ENCODE measurements at regions of chr13 and their contacts with region 1.

Region 1: DNA sequence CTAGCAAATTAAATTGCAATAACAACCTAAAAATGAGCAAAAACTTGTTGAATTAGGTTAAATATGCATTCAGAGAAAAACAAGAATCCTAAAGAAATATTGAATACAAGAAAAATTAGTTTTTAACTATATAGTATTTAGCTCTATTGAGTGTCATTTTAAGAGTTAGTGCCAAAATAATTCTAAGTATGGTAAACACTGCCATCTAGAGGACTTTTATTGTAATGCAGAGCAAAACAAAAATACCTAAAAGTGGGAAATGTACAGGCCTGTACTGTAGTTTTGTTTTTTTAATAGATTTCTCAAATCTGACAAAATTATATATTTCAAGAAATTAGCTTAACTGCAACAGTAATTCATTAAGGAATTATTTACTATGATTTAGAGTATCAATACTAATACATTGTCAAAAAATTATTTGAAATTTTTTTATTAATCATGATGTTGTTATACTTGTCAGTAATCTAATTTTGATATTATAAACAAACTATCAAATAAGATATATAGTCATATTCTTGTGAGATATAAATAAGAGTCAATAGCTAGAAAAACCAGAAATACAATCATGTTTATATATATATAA is 8.2 kb upstream of the PCDH9 start:
- DNase-seq: no peak
- H3K4me3 Mint-ChIP-seq: no peak overlapping the region
- H3K27ac Mint-ChIP-seq: no peak overlapping the region
- H3K4me1 Mint-ChIP-seq: no peaks in the 10 kb centered on the region
- H3K27me3 Mint-ChIP-seq: no peaks in the 10 kb centered on the region

Region 2: DNA sequence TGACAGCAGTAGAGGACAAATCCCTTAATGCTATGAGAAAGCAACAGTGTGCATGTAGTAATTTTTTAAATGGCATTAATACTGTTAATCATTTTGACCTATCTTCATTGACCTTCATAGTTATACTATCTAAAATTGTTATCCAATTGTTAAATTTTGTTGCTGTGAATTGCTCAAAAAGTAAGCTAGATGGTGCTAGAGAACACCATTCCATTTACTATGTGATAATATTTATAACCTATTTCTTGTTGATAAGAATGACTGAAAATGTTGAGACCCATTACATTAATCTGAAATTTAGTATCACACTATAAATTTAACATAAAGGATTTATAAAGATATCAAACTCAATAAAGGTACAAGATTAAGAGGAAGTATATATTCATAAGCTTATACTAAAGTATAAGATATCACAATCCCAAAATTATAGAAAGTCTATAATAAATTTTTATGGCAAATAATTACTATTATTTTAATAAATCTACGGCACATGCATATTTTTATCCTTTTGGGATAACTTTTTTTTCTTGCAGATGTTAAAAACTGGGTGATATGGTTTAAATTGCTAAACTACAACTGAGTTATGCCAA is 1581.5 kb before region 1 on chr13:
- CTCF ChIA-PET with region 1: no interaction called
- intact Hi-C with region 1: loop called (anchors 5 kb)
- DNase-seq: no peak
- H3K4me3 Mint-ChIP-seq: no peak overlapping the region
- H3K27ac Mint-ChIP-seq: no peak overlapping the region
- H3K4me1 Mint-ChIP-seq: no peaks in the 10 kb centered on the region
- H3K27me3 Mint-ChIP-seq: no peaks in the 10 kb centered on the region

Region 3: GRCh38 chr13:66888698-66889097 is 349.7 kb before region 1 on chr13:
- CTCF ChIA-PET with region 1: no interaction called
- intact Hi-C with region 1: no loop called
- DNase-seq: no peak
- H3K4me3 Mint-ChIP-seq: no peak overlapping the region
- H3K27ac Mint-ChIP-seq: no peak overlapping the region
- H3K4me1 Mint-ChIP-seq: no peaks in the 10 kb centered on the region
- H3K27me3 Mint-ChIP-seq: no peaks in the 10 kb centered on the region

Region 4: DNA sequence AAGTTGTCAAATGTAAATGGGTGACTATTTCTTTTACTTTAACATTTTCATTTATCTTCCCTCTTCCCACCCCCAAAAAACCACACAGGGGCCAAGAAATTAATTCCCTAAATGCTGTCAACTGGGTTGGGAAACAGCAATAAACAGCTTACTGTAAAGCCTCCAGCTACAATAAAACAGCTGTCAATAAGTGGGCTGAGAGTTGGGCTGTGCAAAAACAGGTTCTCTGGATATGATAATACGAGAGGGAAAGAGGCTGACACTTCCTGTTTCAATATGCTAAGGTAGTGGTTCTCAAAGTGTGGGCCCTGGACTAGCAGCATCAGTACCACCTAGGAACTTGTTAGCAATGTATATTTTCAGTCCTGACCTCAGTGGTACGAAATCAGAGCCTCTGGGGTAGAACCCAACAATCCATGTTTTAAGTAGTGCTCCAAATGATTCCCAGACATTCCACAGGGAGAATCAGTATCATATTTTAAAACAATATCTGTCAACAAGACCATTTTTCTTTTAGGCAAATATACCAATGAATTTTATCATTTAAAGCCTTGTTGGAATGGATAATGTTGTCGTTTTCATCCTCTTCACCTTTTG is 16.6 kb before region 1 on chr13:
- CTCF ChIA-PET with region 1: no interaction called
- intact Hi-C with region 1: no loop called
- DNase-seq: no peak
- H3K4me3 Mint-ChIP-seq: no peak overlapping the region
- H3K27ac Mint-ChIP-seq: no peak overlapping the region
- H3K4me1 Mint-ChIP-seq: peaks cover 9% of the 10 kb centered on the region
- H3K27me3 Mint-ChIP-seq: peaks cover 11% of the 10 kb centered on the region

Measured in activated naive CD4-positive, alpha-beta T cell treated with anti-CD3 and anti-CD28 coated beads for 36 hours (primary cell).